Calu3 (cell line): ENCODE measurements at regions of chr16 and their contacts with region 1.

Region 1: DNA sequence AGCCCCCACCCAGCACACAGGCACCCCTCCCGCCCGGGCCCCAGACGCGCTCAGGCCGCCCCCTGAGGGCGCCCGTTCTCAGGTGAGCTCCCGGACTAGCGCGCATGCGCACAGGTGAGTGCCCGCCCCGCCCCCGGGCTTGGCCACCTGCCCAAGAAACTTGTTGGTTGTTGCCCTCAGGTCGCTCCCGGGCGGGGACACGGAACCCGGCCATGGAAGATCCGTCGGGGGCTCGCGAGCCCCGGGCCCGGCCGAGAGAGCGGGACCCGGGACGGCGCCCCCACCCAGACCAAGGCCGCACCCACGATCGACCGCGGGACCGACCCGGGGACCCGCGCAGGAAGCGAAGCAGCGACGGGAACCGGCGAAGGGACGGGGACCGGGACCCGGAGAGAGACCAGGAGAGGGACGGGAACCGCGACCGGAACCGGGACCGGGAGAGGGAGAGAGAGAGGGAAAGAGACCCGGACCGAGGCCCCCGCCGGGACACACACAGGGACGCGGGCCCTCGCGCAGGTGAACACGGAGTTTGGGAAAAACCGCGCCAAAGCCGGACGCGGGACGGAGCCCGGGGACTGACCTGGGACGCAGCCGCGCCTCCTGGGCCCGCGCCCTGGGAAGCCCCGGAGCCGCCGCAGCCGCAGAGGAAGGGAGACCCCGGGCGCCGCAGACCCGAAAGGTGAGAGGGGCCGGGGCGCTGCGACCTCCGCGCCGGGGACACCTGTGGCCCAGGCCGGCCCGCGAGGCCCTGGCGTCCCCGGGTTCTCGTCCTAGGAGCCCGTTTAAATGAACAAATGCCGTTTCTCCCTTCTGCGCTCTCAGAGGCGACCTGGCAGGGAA is at the start of gene MARVELD3:
- DNase-seq: peak; percentile 99
- H3K4me3 Mint-ChIP-seq: no peak within 1 kb of the TSS
- H3K27ac Mint-ChIP-seq: peak within 1 kb of the TSS; percentile 56
- H3K4me1 Mint-ChIP-seq: peaks cover 19% of the 10 kb centered on the region
- H3K27me3 Mint-ChIP-seq: no peaks in the 10 kb centered on the region
- CTCF ChIP-seq: no peak
- total RNA-seq, gene MARVELD3: 38.4 and 40.1 TPM in 2 replicates

Region 2: GRCh38 chr16:71658771-71659170 is 32.5 kb after region 1 on chr16:
- CTCF ChIA-PET with region 1: no interaction called
- intact Hi-C with region 1: loop called (anchors 1 kb)
- DNase-seq: no peak
- H3K4me3 Mint-ChIP-seq: no peak overlapping the region
- H3K27ac Mint-ChIP-seq: no peak overlapping the region
- H3K4me1 Mint-ChIP-seq: no peaks in the 10 kb centered on the region
- H3K27me3 Mint-ChIP-seq: no peaks in the 10 kb centered on the region
- CTCF ChIP-seq: no peak